ENCODE measurements at regions of chr5 and their contacts with region 1.

Region 1: DNA sequence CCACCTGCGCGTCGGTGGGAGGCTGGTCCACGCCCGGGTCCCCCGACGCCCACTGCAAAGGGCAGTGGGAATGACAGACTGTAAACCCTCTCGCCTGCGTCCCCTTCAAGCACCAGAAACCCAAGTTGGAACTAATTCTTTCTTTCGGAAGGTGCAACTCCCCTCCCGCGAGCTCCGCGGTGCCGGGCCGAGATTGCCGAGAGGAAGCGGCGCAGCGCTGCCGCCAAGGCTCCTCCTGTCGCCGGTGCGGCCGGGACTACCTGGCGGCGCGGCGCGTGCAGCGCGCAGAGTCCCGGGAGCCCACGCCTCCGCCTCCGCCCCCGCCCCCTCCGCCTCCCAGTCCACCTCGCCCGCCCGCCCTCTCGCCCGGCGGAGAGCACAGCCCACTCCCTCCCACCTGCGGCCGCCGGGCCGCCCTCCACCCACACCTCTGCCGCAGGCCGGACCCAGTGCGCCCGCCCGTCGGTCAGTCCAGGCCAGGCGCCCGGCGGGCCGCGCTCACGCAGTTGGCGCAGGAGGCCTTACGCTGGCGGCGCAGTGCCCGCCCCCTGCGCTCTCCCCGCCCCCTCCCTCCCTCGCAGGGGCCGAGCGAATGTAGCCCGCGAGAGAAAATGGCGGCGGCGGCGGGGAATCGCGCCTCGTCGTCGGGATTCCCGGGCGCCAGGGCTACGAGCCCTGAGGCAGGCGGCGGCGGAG is at the start of gene MAP3K1:
- DNase-seq: peak; percentile 75 to 92 (median 86)
- ATAC-seq: peak; percentile 83
- H3K4me3 ChIP-seq: peak within 1 kb of the TSS; percentile 95
- H3K4me3 Mint-ChIP-seq: peak within 1 kb of the TSS; percentile 93 to 97 (median 95)
- H3K27ac ChIP-seq: peak within 1 kb of the TSS; percentile 83
- H3K27ac Mint-ChIP-seq: peak within 1 kb of the TSS; percentile 91 to 97 (median 93)
- H3K4me1 ChIP-seq: peaks cover 8 to 17% of the 10 kb centered on the region in 2 donors
- H3K4me1 Mint-ChIP-seq: peaks cover 23 to 47% (median 41%) of the 10 kb centered on the region in 7 donors
- H3K27me3 ChIP-seq: no peaks in the 10 kb centered on the region
- H3K27me3 Mint-ChIP-seq: peaks cover 0 to 6% (median 0%) of the 10 kb centered on the region in 5 donors
- total RNA-seq, gene MAP3K1: 54.4 to 85.4 (median 77.3) TPM

Region 2: DNA sequence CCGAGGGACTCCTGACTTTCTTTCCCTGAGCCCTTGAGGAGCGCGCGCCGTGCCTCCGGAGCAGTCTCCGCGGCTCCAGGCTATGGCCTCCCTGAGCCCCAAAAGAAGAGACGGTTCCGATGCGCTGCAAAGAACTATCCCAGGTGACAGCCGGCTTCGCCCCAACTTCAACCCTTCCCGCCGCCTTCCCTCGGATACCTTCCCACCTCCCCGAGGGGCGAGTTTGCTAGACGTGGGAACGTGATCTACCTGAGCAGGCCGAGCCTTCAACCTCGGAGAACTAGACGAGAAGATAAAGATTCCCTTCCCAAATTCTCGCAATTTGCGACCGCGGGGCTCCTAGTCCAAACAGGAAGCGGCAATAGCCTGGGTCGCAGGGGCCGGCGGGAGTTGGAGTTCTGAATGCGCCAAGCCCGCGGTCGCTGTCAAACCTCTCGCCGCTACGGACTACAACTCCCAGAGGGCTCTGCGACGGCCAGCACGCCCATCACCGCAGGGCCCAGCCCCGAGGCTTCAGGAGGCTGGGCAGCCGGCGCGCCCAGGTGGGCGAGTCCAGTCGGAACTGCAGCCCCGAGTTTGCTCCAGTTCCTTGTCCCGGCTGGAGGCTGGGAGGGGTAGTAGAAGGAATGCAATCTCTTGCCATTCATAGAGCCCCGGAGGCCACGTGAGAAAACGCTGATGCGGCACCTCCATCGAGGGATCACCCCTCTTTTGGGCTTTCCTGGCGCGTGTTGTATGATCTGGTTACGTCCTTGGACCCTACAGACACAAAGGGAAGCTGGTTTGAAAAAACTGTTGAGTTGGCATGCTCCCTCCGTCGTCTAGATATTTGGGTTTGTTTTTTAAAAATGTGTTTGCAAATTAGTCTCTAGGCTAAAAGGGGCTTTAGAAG is 1102.9 kb before region 1 on chr5 and contains the start of gene SLC38A9:
- CTCF ChIA-PET with region 1: no interaction called
- POLR2A ChIA-PET with region 1: no interaction called
- intact Hi-C with region 1: loop called in 1 of 2 experiments (anchors 5 kb)
- DNase-seq: peak; percentile 82 to 91 (median 90)
- ATAC-seq: peak; percentile 100
- H3K4me3 ChIP-seq: peak within 1 kb of the TSS; percentile 87
- H3K4me3 Mint-ChIP-seq: peak within 1 kb of the TSS; percentile 94 to 99 (median 98)
- H3K27ac ChIP-seq: peak within 1 kb of the TSS; percentile 72
- H3K27ac Mint-ChIP-seq: peak within 1 kb of the TSS; percentile 76 to 97 (median 91)
- H3K4me1 ChIP-seq: peaks cover 12 to 16% of the 10 kb centered on the region in 2 donors
- H3K4me1 Mint-ChIP-seq: peaks cover 20 to 40% (median 29%) of the 10 kb centered on the region in 7 donors
- H3K27me3 ChIP-seq: no peaks in the 10 kb centered on the region
- H3K27me3 Mint-ChIP-seq: peaks cover 0 to 3% (median 0%) of the 10 kb centered on the region in 5 donors
- total RNA-seq, gene SLC38A9: 17.7 to 32.6 (median 30.4) TPM

Region 3: DNA sequence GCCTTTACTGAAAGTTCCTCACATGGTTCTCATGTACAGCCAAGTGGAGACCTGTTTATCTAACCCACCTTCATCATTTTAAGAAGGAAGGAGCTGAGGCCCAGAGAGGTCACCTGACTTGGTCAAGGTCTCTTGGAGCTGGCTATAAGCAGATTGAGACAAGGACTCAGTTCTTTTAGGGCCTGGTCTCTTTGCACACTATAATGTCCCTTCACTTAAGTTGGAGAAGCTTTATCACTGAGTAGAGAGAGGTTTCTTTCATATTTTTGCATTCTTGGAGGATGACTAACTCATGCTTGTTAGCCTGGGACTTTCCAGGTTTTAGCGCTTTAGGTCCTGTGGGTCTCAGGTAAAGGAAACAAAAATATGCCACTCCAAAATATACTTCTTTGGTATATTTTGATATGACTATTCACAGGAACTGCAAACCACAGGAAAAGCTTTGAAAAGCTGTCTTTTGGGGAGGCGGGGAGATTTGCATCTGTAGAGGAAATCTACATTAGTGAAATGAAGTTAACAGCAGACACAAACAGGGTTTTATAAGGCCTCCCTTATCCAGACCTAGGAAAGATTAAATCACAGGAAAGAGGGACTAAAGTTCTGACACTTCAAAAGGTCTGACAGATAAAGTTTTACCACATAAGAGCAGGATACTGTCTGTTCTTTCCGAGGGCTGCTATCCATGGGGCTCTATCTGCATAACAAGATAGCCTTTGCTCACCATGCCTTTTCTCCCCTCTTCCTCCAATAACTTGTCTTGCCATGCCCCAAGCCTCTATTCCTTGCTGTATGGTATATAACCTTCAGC is 486.2 kb before region 1 on chr5:
- CTCF ChIA-PET with region 1: no interaction called
- POLR2A ChIA-PET with region 1: interaction called, 4 read pairs
- intact Hi-C with region 1: loop called (anchors 1 to 2 kb)
- DNase-seq: peak in 8 of 9 donors; percentile 22 to 75 (median 54)
- ATAC-seq: peak; percentile 88
- H3K4me3 ChIP-seq: peak overlapping the region; percentile 40
- H3K4me3 Mint-ChIP-seq: peak overlapping the region in 9 of 10 donors; percentile 15 to 81 (median 70)
- H3K27ac ChIP-seq: peak overlapping the region; percentile 69
- H3K27ac Mint-ChIP-seq: peak overlapping the region; percentile 46 to 95 (median 83)
- H3K4me1 ChIP-seq: peaks cover 22 to 49% of the 10 kb centered on the region in 2 donors
- H3K4me1 Mint-ChIP-seq: peaks cover 33 to 86% (median 72%) of the 10 kb centered on the region in 7 donors
- H3K27me3 ChIP-seq: no peaks in the 10 kb centered on the region
- H3K27me3 Mint-ChIP-seq: no peaks in the 10 kb centered on the region

Region 4: DNA sequence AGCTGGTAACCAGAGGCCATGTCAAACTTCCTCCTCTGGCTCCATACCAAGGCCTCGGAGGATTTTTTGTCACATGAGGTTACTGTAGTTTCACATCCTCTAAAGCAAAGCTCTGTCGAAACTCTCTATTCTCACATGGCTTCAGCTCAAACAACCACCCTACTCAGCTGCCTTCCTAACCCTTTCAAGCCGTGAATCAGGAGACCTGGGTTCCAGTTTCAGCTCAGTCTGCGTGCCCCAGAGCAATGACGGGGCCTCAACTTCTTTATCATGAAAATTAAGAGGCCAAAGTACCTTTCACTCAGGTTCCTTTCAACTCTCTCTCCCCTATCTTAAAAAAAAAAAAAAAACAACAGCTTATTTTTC is 145.0 kb before region 1 on chr5:
- CTCF ChIA-PET with region 1: no interaction called
- POLR2A ChIA-PET with region 1: interaction called, 13 read pairs
- intact Hi-C with region 1: loop called in 1 of 2 experiments (anchors 2 kb)
- DNase-seq: peak in 7 of 9 donors; percentile 9 to 68 (median 40)
- ATAC-seq: peak; percentile 89
- H3K4me3 ChIP-seq: peak overlapping the region; percentile 13
- H3K4me3 Mint-ChIP-seq: peak overlapping the region; percentile 55 to 83 (median 70)
- H3K27ac ChIP-seq: peak overlapping the region; percentile 65
- H3K27ac Mint-ChIP-seq: peak overlapping the region; percentile 80 to 95 (median 90)
- H3K4me1 ChIP-seq: peaks cover 0 to 40% of the 10 kb centered on the region in 2 donors
- H3K4me1 Mint-ChIP-seq: peaks cover 35 to 53% (median 45%) of the 10 kb centered on the region in 7 donors
- H3K27me3 ChIP-seq: no peaks in the 10 kb centered on the region
- H3K27me3 Mint-ChIP-seq: peaks cover 0 to 10% (median 0%) of the 10 kb centered on the region in 5 donors

Region 5: DNA sequence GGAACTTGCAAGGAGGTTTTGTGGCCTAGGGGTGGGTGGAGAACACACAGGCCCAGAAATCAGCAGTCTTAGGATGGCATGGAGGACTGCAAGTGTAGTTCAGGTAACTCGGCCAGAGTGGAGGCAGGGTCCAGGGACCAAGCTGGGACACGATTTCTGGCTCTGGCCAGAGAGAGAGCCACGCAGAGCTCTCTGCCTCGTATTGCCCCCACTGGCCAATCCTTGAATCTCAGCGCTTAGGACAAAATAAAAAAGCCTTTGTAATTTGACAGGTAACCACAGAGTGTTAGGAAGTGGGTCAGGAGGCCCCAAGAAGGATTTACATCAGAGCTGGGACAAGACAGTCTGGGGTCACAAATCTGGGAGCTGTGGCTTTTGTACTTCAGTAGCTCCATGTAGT is 11.9 kb after region 1 on chr5:
- CTCF ChIA-PET with region 1: interaction called, 3 read pairs
- POLR2A ChIA-PET with region 1: interaction called, 6 read pairs
- intact Hi-C with region 1: loop called (anchors 1 kb)
- DNase-seq: peak in 1 of 9 donors; percentile 34
- ATAC-seq: peak; percentile 37
- H3K4me3 ChIP-seq: no peak overlapping the region
- H3K4me3 Mint-ChIP-seq: peak overlapping the region; percentile 18 to 93 (median 59)
- H3K27ac ChIP-seq: peak overlapping the region; percentile 51
- H3K27ac Mint-ChIP-seq: peak overlapping the region in 8 of 9 donors; percentile 56 to 95 (median 80)
- H3K4me1 ChIP-seq: peaks cover 38 to 84% of the 10 kb centered on the region in 2 donors
- H3K4me1 Mint-ChIP-seq: peaks cover 75 to 100% (median 95%) of the 10 kb centered on the region in 7 donors
- H3K27me3 ChIP-seq: no peaks in the 10 kb centered on the region
- H3K27me3 Mint-ChIP-seq: no peaks in the 10 kb centered on the region

Region 6: DNA sequence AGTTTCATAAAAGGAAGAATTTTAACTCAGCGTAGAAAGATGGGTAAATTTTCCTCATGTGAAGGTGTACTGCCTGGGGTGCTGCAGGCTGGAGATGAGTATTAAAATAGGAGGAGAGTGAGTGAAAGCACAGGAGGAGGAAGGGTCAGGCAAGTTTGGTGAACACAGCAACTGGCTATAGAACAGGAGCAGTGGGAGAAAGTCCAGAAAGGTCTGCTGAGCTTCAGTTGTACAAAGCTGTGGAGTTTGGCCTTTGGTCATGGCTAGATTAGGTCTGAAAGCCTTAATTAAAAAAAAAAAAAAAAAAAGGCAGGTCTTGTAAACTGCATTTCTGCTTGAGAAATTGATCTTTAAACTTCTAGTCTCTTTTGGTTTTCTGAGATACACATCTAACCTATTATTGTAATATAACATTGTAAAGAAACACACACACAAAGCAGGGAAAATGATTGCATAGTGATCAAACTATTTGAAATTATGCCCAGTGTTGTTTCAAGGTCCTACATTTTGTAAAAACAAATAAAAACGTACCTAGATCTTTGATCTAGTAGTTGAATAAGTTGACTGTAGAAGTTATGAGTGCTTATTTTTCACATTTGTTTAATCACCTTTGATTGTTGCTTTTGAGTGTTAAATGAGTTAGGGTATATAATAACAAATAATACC is 43.8 kb after region 1 on chr5:
- CTCF ChIA-PET with region 1: no interaction called
- POLR2A ChIA-PET with region 1: no interaction called
- intact Hi-C with region 1: no loop called
- DNase-seq: no peak
- ATAC-seq: no peak
- H3K4me3 ChIP-seq: no peak overlapping the region
- H3K4me3 Mint-ChIP-seq: no peak overlapping the region
- H3K27ac ChIP-seq: no peak overlapping the region
- H3K27ac Mint-ChIP-seq: peak overlapping the region in 8 of 9 donors; percentile 3 to 86 (median 50)
- H3K4me1 ChIP-seq: peaks cover under 1 to 12% of the 10 kb centered on the region in 2 donors
- H3K4me1 Mint-ChIP-seq: peaks cover 23 to 72% (median 50%) of the 10 kb centered on the region in 7 donors
- H3K27me3 ChIP-seq: no peaks in the 10 kb centered on the region
- H3K27me3 Mint-ChIP-seq: no peaks in the 10 kb centered on the region

Region 7: GRCh38 chr5:56951946-56952691 is 137.0 kb after region 1 on chr5 and contains the start of gene MIER3:
- CTCF ChIA-PET with region 1: no interaction called
- POLR2A ChIA-PET with region 1: no interaction called
- intact Hi-C with region 1: loop called (anchors 1 to 5 kb)
- DNase-seq: peak; percentile 66 to 87 (median 80)
- ATAC-seq: peak; percentile 94
- H3K4me3 ChIP-seq: peak within 1 kb of the TSS; percentile 75
- H3K4me3 Mint-ChIP-seq: peak within 1 kb of the TSS; percentile 89 to 98 (median 96)
- H3K27ac ChIP-seq: peak within 1 kb of the TSS; percentile 73
- H3K27ac Mint-ChIP-seq: peak within 1 kb of the TSS in 8 of 9 donors; percentile 84 to 95 (median 88)
- H3K4me1 ChIP-seq: peaks cover 6 to 10% of the 10 kb centered on the region in 2 donors
- H3K4me1 Mint-ChIP-seq: peaks cover 18 to 32% (median 22%) of the 10 kb centered on the region in 7 donors
- H3K27me3 ChIP-seq: peaks cover 0 to 5% of the 10 kb centered on the region in 2 donors
- H3K27me3 Mint-ChIP-seq: peaks cover 10 to 45% (median 24%) of the 10 kb centered on the region in 5 donors
- total RNA-seq, gene MIER3: 14.9 to 35.0 (median 26.2) TPM

Measured in naive thymus-derived CD4-positive, alpha-beta T cell (primary cell).